ENCODE measurements at regions of chr2 and their contacts with region 1.

Region 1: GRCh38 chr2:74458132-74458925 is at the start of gene WBP1:
- DNase-seq: peak; percentile 100
- H3K4me3 Mint-ChIP-seq: peak within 1 kb of the TSS; percentile 99
- H3K27ac Mint-ChIP-seq: peak within 1 kb of the TSS; percentile 99
- H3K4me1 Mint-ChIP-seq: peaks cover 33% of the 10 kb centered on the region
- H3K27me3 Mint-ChIP-seq: no peaks in the 10 kb centered on the region
- total RNA-seq, gene WBP1: 38.6 and 40.7 TPM in 2 replicates

Region 2: GRCh38 chr2:73736855-73737779 is 721.2 kb before region 1 on chr2 and contains the start of gene TPRKB:
- intact Hi-C with region 1: loop called (anchors 2 kb)
- DNase-seq: peak; percentile 95
- H3K4me3 Mint-ChIP-seq: peak within 1 kb of the TSS; percentile 97
- H3K27ac Mint-ChIP-seq: peak within 1 kb of the TSS; percentile 87
- H3K4me1 Mint-ChIP-seq: peaks cover 8% of the 10 kb centered on the region
- H3K27me3 Mint-ChIP-seq: no peaks in the 10 kb centered on the region
- total RNA-seq, gene TPRKB: 31.9 and 36.0 TPM in 2 replicates

Region 3: GRCh38 chr2:74421221-74421870 is 37.0 kb before region 1 on chr2 and contains the starts of genes C2orf81 and WDR54:
- intact Hi-C with region 1: loop called (anchors 1 kb)
- DNase-seq: peak; percentile 94
- H3K4me3 Mint-ChIP-seq: peak within 1 kb of the TSS; percentile 100
- H3K27ac Mint-ChIP-seq: peak within 1 kb of the TSS; percentile 100
- H3K4me1 Mint-ChIP-seq: peaks cover 15% of the 10 kb centered on the region
- H3K27me3 Mint-ChIP-seq: peaks cover 2% of the 10 kb centered on the region
- total RNA-seq, gene C2orf81: 1.6 and 1.9 TPM in 2 replicates
- total RNA-seq, gene WDR54: 76.7 and 78.0 TPM in 2 replicates

Region 4: GRCh38 chr2:74482801-74483674 is 24.7 kb after region 1 on chr2 and contains the starts of genes CCDC142 and TTC31:
- intact Hi-C with region 1: loop called (anchors 1 kb)
- DNase-seq: peak; percentile 91
- H3K4me3 Mint-ChIP-seq: peak within 1 kb of the TSS; percentile 99
- H3K27ac Mint-ChIP-seq: peak within 1 kb of the TSS; percentile 99
- H3K4me1 Mint-ChIP-seq: peaks cover 26% of the 10 kb centered on the region
- H3K27me3 Mint-ChIP-seq: no peaks in the 10 kb centered on the region
- total RNA-seq, gene CCDC142: 25.1 and 26.9 TPM in 2 replicates
- total RNA-seq, gene TTC31: 35.1 and 35.9 TPM in 2 replicates

Region 5: DNA sequence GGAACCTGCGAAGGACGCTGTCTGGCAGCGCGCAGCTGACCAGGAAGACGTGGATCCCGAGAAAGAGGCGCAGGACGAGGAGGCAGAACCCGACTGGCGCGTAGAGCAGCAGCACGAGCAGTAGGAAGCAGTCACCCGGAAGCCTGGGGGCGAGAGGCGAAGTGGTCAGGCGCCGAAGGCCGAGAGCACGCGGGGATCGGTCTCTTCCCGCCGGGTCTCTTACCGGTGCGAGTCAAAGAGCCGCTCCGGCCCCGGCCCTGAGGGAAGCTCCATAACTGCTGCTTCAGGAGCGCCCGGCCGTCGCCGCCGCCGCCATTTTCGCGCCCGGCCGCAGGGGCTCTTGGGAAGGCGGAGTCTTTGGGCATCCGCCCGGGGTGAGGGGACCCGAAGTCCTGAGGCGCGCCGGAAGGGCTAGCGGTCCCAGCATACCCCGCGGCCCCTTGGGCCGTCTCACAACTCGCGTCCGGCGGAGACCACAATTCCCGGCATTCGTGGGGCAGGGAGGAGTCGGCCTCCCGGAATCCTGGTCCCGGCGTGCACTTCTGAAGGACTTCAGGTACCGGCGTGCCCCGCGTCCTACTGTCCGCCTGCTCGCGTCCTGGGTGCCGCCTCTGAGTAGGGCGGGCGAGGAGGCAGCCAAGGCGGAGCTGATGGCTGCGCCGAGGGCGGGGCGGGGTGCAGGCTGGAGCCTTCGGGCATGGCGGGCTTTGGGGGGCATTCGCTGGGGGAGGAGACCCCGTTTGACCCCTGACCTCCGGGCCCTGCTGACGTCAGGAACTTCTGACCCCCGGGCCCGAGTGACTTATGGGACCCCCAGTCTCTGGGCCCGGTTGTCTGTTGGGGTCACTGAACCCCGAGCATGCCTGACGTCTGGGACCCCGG is 71.3 kb after region 1 on chr2 and contains the starts of genes AUP1 and HTRA2:
- intact Hi-C with region 1: loop called (anchors 1 kb)
- DNase-seq: peak; percentile 93
- H3K4me3 Mint-ChIP-seq: peak within 1 kb of the TSS; percentile 99
- H3K27ac Mint-ChIP-seq: peak within 1 kb of the TSS; percentile 96
- H3K4me1 Mint-ChIP-seq: peaks cover 41% of the 10 kb centered on the region
- H3K27me3 Mint-ChIP-seq: no peaks in the 10 kb centered on the region
- total RNA-seq, gene AUP1: 155 TPM in 2 replicates
- total RNA-seq, gene HTRA2: 61.5 and 64.1 TPM in 2 replicates

Region 6: DNA sequence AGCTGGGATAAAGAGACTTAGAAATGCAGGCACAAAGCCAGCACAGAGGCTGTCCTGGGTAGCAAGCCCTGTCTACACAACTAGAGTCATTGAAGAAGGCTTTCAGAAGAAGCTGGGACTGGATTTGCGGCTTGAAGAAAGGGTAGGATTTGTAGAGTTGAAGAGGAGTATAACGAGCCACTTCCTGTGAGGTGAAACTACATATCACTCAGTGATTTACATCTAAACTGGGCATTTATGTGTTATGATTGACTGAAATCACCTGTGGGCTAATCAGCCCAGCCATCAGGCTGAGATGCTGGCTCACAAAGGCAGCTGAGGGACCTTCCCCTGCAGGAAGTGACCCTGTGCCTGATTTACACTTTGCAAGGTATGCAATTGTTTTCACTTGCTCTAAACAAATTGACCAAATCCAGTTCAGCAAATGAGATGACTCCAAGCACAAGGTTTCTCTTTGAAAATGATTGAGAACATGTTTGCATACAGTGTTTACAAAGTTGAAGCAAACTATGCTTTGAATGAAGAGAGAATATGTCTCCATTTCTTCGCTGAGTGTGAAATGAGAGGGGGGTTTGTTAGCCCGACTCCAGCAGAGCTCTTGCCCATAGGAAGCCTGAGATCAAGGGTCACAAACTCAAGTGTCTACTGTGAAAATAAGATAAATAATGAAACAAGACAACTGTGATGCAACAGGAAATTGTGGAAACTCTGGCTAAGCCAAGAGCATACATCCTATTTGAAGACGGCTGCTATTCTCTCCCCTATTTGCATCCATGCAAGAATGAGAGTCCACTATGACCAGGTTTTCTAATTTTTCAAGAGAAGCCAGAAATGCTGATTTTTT is 306.3 kb after region 1 on chr2:
- intact Hi-C with region 1: no loop called
- DNase-seq: no peak
- H3K4me3 Mint-ChIP-seq: no peak overlapping the region
- H3K27ac Mint-ChIP-seq: no peak overlapping the region
- H3K4me1 Mint-ChIP-seq: peaks cover 17% of the 10 kb centered on the region
- H3K27me3 Mint-ChIP-seq: no peaks in the 10 kb centered on the region

Measured in activated T-helper 2 cell treated with anti-CD3 and anti-CD28 coated beads, Interferon-gamma antibody, Interleukin-2, Interleukin-4, amounts not matched to agents 10 μg/mL and 5 μg/mL and 100 μg/mL, durations not matched to agents 14 hours and 24 hours and 36 hours (primary cell).